Activated CD8-positive, alpha-beta T cell treated with anti-CD3 and anti-CD28 coated beads, Interleukin-2, amount 10 ng/mL, durations not matched to agents 7 days and 5 days (primary cell): ENCODE measurements at regions of chr19 and their contacts with region 1.

Region 1: DNA sequence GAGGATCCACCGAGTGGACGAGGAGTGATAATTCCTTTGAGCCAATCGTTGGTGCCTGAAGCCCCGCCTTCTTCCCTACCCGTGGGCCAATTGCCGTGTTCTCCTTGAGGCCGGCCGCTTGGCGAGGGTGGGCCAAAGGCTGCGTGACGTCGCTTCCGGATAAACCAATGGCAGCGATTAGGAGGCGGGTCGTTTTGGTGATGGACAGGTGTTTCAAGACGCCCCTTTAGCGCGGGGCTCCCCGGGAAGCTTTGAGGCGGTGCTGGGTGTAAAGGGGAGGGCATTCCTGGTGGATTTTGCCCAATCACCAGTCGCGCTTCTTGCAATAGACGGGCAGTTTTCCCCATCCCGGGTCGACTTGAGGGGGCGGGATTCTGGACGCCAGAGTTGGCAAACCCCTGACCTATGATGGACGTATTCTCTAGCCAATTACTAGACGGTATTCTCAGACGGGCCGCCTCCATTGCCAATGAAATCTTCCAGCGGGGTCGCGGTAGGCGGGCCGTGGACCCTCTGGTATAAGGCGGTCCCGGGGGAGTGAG is 310 bp upstream of the PRMT1 start:
- DNase-seq: peak; percentile 99
- ATAC-seq: peak; percentile 79
- H3K4me3 Mint-ChIP-seq: peak overlapping the region; percentile 97
- H3K27ac Mint-ChIP-seq: peak overlapping the region; percentile 100
- H3K4me1 Mint-ChIP-seq: peaks cover 39% of the 10 kb centered on the region
- H3K27me3 Mint-ChIP-seq: no peaks in the 10 kb centered on the region

Region 2: GRCh38 chr19:49502866-49503581 is 173.7 kb before region 1 on chr19:
- CTCF ChIA-PET with region 1: interaction called, 17 read pairs
- POLR2A ChIA-PET with region 1: interaction called, 3 read pairs
- DNase-seq: peak; percentile 62
- ATAC-seq: no peak
- H3K4me3 Mint-ChIP-seq: no peak overlapping the region
- H3K27ac Mint-ChIP-seq: peak overlapping the region; percentile 43
- H3K4me1 Mint-ChIP-seq: peaks cover 49% of the 10 kb centered on the region
- H3K27me3 Mint-ChIP-seq: no peaks in the 10 kb centered on the region

Region 3: DNA sequence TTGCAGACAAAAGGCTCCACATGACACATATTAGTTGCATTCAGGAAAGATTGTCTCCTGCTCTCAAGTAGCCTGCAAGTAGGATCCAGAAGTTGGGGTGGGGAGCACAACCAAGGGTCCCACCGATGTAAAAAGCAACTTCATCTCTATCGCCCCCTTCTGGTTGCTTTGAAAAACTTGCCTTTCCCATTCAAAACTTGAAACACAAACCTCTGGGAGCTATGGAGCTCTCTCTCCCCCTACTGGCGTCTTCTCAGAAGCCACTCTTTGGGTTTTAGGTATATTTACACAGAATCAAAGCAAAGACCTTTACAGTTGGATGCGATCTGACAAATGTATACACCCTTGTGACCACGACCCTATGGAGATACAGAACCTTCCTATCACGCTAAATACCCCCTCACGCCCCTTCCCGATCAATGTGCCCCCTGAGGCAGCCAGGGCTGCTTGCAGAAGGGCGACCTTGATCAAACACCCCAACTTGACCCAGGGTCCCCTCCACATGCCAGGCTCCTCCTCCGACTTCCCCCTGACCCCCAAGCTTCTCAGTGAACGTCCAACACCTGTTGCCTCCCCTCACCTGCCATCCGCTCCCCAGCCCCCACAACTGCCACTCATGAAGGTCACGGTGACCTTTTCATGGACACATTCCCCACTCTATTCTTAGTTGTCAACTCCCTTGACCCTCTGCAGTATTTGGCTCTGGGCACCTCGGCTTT is 106.5 kb before region 1 on chr19:
- CTCF ChIA-PET with region 1: interaction called, 45 read pairs
- POLR2A ChIA-PET with region 1: no interaction called
- DNase-seq: peak; percentile 88
- ATAC-seq: peak; percentile 16
- H3K4me3 Mint-ChIP-seq: peak overlapping the region; percentile 7
- H3K27ac Mint-ChIP-seq: peak overlapping the region; percentile 66
- H3K4me1 Mint-ChIP-seq: peaks cover 65% of the 10 kb centered on the region
- H3K27me3 Mint-ChIP-seq: no peaks in the 10 kb centered on the region

Region 4: DNA sequence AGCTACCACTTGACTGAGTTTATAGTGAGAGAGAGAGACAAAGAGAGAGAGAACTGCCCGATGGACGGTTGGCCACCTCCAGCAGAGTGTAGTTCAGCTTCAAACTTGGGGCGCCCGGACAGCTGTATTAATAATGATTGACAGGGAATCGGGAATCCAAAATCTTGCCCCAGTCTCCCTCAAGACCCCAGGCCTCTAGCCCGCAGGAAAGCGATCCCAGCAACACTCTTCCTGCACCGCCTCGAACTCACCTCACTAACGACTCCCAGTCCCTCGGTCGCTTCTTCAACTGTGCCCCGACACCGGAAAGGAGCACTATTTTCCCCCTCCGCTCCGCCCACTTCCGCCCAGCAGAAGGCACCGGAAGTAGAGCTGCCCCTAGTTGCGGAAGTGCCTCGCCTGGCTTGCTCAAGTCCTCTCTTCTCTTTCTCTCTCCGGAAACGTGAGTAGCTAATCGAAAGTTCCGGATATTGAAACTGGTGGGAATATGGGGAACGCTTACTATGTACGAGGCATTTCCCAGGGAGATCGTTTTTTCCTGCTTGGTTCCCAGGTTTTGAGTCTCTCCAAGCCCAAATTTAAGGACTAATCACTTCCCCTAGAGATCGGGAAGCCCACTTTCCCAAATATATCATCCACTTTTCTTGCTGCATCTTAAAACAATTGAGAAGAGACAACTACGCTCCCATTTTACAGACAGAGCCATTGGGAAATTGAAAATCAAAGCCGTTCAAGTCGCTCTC is 96.3 kb before region 1 on chr19 and contains the start of gene NOSIP:
- CTCF ChIA-PET with region 1: interaction called, 24 read pairs
- POLR2A ChIA-PET with region 1: interaction called, 17 read pairs
- DNase-seq: peak; percentile 98
- ATAC-seq: peak; percentile 97
- H3K4me3 Mint-ChIP-seq: peak within 1 kb of the TSS; percentile 96
- H3K27ac Mint-ChIP-seq: peak within 1 kb of the TSS; percentile 91
- H3K4me1 Mint-ChIP-seq: peaks cover 33% of the 10 kb centered on the region
- H3K27me3 Mint-ChIP-seq: no peaks in the 10 kb centered on the region
- total RNA-seq, gene NOSIP: 147 to 159 TPM

Region 5: DNA sequence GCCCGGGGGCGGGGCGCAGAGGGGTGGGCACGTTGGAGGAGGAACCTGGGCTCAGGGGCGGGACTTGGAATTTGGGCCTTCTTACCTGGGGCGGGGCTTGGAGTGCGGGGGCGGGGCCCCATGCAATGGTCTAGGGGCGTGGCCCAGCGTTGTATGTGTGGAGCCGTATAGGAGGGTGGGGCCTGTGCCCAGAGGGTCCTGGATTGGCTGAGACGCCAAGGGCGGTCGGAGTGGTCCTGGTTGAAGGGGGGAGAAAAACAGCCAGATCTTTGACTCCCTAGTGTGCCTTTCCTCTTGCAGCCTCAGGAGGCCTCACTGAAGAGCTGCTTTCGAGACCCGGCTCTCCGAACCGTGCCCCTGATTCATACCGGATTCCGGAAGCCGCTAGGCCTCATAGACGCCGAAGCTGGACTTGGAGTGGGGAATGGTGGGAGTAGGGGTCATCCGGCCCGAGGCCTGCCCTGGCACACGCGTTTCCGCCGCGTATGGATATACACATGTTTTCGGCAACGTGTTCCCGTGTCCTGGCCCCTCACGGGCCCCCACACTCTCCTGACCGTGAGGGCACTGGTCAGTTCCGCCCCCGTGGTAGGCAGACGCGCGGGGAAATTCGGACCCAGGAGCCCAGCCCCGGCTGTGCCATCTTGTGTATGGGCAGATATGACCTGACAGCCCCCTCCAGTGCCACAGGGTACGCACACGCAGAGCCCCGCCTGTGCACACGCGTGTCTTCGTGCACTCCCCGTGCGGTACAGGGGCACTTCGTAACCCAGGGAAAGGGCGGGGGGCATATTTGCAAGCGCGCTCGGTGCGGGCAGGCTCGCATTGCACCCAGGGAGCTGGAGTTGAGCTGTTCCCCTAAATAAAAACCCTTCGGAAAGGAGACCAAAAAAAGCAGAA is 86.4 kb before region 1 on chr19:
- CTCF ChIA-PET with region 1: interaction called, 10 read pairs
- POLR2A ChIA-PET with region 1: interaction called, 8 read pairs
- DNase-seq: peak; percentile 98
- ATAC-seq: peak; percentile 85
- H3K4me3 Mint-ChIP-seq: peak overlapping the region; percentile 80
- H3K27ac Mint-ChIP-seq: peak overlapping the region; percentile 92
- H3K4me1 Mint-ChIP-seq: peaks cover 31% of the 10 kb centered on the region
- H3K27me3 Mint-ChIP-seq: peaks cover 2% of the 10 kb centered on the region

Region 6: DNA sequence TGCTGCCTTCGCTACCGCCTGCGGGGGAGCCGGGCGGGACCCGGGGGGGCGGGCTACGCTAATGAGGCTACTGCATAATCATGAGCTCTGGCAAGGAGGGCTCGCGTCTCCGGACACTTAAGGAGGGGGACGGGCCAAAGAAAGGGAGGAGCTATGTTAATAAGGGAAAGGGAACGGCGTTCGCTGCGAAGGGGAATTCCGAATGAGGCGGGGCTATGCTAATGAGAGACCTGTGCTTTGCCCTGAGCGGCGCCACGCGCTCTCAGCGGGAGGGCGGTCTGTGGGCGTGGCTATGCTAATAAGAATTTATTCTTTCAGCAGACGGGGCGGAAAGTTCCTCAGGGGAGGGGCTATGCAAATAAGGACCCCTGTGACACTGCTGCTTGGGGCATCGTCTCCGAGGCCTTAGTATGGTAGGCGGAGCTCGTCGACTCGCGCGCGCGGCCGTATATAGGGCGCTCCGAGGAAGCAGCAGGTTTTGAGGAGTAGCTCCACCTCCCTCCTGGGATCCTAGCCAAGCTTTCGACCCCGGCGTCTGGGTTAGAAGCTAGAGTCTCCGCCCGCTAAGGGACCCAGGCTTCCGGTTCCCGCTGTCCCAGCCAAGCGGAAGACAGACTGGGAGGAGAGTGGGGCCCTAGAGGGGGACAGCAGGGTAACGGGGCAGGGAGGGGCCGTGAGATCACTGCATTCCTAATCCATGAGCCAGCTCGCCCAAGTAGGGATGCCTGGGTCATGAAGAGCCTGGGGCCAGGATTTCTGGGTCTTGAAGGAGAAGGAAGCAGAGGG is 36.5 kb before region 1 on chr19 and contains the start of gene RRAS:
- CTCF ChIA-PET with region 1: interaction called, 13 read pairs
- POLR2A ChIA-PET with region 1: interaction called, 9 read pairs
- DNase-seq: peak; percentile 100
- ATAC-seq: peak; percentile 77
- H3K4me3 Mint-ChIP-seq: peak within 1 kb of the TSS; percentile 90
- H3K27ac Mint-ChIP-seq: peak within 1 kb of the TSS; percentile 98
- H3K4me1 Mint-ChIP-seq: peaks cover 55% of the 10 kb centered on the region
- H3K27me3 Mint-ChIP-seq: peaks cover 4% of the 10 kb centered on the region
- total RNA-seq, gene RRAS: 8.1 to 8.4 TPM

Region 7: GRCh38 chr19:49665351-49666119 is 11.2 kb before region 1 on chr19 and contains the starts of genes BCL2L12 and IRF3:
- CTCF ChIA-PET with region 1: interaction called, 33 read pairs
- POLR2A ChIA-PET with region 1: interaction called, 24 read pairs
- DNase-seq: peak; percentile 99
- ATAC-seq: peak; percentile 87
- H3K4me3 Mint-ChIP-seq: peak within 1 kb of the TSS; percentile 94
- H3K27ac Mint-ChIP-seq: peak within 1 kb of the TSS; percentile 92
- H3K4me1 Mint-ChIP-seq: peaks cover 35% of the 10 kb centered on the region
- H3K27me3 Mint-ChIP-seq: no peaks in the 10 kb centered on the region
- total RNA-seq, gene BCL2L12: 84.7 to 87.7 TPM
- total RNA-seq, gene IRF3: 133 to 137 TPM